Activated CD8-positive, alpha-beta T cell treated with anti-CD3 and anti-CD28 coated beads for 36 hours (primary cell): ENCODE measurements at regions of chr1 and their contacts with region 1.

Region 1: DNA sequence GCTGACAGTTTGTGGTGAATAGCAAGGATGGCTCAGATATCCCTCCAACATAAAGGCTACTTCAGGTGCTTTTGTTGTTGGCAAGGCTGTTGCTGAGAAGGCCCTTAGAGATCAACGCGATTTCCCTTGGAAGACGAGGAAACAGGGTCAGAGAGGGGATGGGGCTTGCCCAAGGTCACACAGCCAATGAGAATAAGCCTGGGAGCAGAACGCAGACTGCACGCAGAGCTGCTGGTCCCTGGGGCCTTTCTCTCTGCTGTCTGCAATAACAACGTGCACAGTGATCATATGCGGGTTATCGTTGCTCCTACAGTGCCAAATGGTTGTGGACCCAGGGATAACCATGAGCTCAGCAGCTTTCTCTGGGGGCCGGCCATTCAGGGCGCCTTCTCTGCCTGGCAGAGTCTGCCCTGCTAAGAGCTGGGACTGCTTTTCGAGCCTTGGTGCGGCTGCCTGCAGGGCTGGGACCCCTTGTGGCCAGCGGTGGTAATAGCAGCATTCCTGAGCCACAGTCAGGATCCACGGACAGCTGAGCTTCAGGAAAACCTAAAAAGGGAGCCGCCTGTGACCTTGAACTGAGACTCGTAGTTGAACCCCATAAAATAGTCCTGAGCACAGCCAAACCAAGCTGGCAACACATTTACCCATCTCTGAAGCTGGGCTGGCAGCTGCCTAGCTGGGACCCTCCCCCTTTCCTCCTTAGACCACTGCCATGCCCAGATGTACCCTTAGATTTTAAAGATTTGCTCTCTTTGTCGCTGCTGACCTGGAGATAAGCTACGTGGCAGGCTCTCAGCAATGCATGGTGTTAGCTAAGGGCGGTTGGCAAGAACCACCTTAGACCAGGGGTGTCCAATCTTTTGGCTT is 39.8 kb downstream of the HTR6 start:
- DNase-seq: peak; percentile 61
- ATAC-seq: peak; percentile 88
- H3K4me3 Mint-ChIP-seq: no peak overlapping the region
- H3K27ac Mint-ChIP-seq: no peak overlapping the region
- H3K4me1 Mint-ChIP-seq: peaks cover 2% of the 10 kb centered on the region
- H3K27me3 Mint-ChIP-seq: no peaks in the 10 kb centered on the region
- CTCF ChIP-seq: peak; percentile 91

Region 2: DNA sequence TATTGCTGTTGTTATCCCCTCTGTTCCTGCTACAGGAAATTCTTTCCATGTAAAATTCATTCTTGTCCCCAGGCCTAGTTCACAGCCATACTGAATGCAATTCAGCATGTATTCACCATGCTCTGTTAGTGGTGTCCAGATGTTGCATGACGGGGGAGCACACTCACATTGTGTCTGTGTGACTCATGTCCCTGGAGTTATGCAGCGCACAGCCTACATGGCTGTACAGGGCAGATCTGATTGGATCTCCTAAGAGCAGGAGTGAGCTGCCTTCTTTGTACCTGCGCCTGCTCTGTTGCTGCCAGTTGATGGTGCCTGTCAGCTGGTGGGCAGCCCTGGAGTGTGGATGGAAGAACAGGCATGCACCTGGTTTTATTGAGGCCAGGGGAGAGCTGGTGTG is 22.2 kb before region 1 on chr1:
- CTCF ChIA-PET with region 1: interaction called, 15 read pairs
- POLR2A ChIA-PET with region 1: interaction called, 4 read pairs
- intact Hi-C with region 1: no loop called
- DNase-seq: no peak
- ATAC-seq: no peak
- H3K4me3 Mint-ChIP-seq: no peak overlapping the region
- H3K27ac Mint-ChIP-seq: no peak overlapping the region
- H3K4me1 Mint-ChIP-seq: no peaks in the 10 kb centered on the region
- H3K27me3 Mint-ChIP-seq: no peaks in the 10 kb centered on the region
- CTCF ChIP-seq: no peak

Region 3: DNA sequence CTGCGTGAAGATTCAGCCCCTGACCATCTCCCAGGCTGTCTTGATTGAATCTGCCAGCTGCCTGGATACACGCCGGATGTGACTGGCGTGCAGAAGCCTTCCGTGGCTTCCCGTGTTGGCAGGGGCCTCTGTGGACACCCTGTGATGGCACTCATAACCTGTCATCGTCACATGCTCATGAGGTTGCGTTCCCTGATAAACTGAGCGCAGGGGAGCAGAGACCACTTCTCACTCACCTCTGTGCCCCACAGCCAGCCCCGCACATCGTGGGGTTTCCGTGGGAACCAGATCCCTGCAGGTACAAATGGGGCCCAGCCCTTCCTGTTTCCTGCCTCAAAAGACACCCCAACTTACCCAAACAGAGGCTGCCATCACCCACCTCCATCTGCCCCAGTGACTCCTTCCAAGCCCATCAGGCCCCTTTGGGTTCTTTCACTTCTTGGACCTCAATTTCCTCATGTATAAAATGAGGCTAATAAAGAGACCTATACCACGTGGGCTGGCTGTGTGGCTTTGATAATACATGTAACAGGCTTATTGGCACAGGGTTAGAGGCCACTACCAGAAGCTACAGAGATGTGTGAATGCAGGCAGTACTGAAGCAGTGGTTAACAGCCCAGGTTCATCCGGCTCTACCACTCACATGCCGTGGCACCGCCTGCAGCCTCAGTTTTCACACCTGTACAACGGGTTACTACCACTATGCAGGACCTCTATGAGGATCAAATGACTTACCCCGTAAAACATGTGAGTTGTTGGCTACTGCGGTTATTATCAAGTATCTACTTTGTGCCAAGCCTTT is 16.2 kb before region 1 on chr1:
- CTCF ChIA-PET with region 1: interaction called, 15 read pairs
- POLR2A ChIA-PET with region 1: interaction called, 4 read pairs
- intact Hi-C with region 1: no loop called
- DNase-seq: peak; percentile 37
- ATAC-seq: peak; percentile 73
- H3K4me3 Mint-ChIP-seq: no peak overlapping the region
- H3K27ac Mint-ChIP-seq: peak overlapping the region; percentile 71
- H3K4me1 Mint-ChIP-seq: peaks cover 35% of the 10 kb centered on the region
- H3K27me3 Mint-ChIP-seq: no peaks in the 10 kb centered on the region
- CTCF ChIP-seq: no peak

Region 4: DNA sequence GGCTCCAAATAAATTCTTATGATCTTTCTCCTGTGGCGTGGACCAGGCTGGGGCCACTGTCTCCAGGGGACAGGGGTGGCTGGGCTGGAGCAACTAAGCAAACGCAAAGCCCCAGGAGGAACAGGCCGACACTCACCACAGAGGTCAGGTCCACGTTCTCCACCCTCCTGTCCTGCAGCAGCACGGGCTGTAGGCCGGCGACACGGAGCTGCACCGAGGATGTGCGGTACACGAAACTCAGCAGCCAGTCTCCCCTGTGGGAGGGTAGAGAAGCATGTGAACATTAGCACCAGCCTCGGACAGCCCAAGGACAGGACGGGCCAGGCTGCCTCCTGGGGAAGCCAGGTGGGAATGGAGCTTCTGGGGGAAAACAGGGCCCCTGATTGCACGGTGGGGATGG is 10.2 kb before region 1 on chr1:
- CTCF ChIA-PET with region 1: interaction called, 18 read pairs
- POLR2A ChIA-PET with region 1: no interaction called
- intact Hi-C with region 1: no loop called
- DNase-seq: no peak
- ATAC-seq: no peak
- H3K4me3 Mint-ChIP-seq: no peak overlapping the region
- H3K27ac Mint-ChIP-seq: no peak overlapping the region
- H3K4me1 Mint-ChIP-seq: peaks cover 15% of the 10 kb centered on the region
- H3K27me3 Mint-ChIP-seq: no peaks in the 10 kb centered on the region
- CTCF ChIP-seq: no peak

Region 5: GRCh38 chr1:19715334-19716203 is 11.1 kb after region 1 on chr1:
- CTCF ChIA-PET with region 1: interaction called, 21 read pairs
- POLR2A ChIA-PET with region 1: interaction called, 3 read pairs
- intact Hi-C with region 1: no loop called
- DNase-seq: peak; percentile 96
- ATAC-seq: peak; percentile 95
- H3K4me3 Mint-ChIP-seq: no peak overlapping the region
- H3K27ac Mint-ChIP-seq: no peak overlapping the region
- H3K4me1 Mint-ChIP-seq: peaks cover 17% of the 10 kb centered on the region
- H3K27me3 Mint-ChIP-seq: no peaks in the 10 kb centered on the region
- CTCF ChIP-seq: peak; percentile 79